Activated naive CD4-positive, alpha-beta T cell treated with anti-CD3 and anti-CD28 coated beads for 36 hours (primary cell): ENCODE measurements at regions of chr14 and their contacts with region 1.

Region 1: DNA sequence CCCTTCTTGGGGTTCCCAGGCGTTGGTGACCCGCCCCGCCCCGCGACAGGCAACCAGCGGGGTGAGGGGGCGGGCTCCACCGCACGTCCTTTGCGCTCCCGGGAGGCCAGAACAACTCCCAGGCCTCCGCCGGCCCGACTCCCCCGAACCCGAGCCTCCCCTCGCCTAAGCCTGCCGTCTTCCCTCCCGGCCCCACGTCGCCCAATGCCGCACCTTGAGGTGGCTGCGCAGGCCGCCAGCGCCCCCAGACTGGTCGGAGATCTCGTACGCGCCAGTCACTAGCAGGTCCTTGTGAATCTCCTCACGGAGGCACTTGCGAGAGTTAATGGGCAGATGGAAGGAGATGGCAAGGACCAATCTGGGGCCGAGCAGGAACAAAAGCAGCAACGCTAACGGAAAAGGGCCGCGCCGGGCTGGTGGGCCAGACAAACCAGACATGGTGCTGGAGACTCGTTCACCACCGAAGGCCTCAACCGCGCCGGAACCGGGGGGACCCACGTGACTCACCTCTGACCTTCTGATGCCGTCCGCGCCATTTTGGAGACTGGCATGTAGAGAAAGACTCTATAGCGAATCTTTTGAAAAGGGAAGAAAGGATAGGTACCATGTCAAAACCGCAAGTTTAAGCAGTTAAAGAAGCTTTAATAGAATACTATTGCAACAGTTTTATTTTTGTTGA is at the start of gene TMED10:
- DNase-seq: peak; percentile 93
- H3K4me3 Mint-ChIP-seq: peak within 1 kb of the TSS; percentile 91
- H3K27ac Mint-ChIP-seq: peak within 1 kb of the TSS; percentile 97
- H3K4me1 Mint-ChIP-seq: peaks cover 43% of the 10 kb centered on the region
- H3K27me3 Mint-ChIP-seq: no peaks in the 10 kb centered on the region
- total RNA-seq, gene TMED10: 151 to 156 TPM

Region 2: DNA sequence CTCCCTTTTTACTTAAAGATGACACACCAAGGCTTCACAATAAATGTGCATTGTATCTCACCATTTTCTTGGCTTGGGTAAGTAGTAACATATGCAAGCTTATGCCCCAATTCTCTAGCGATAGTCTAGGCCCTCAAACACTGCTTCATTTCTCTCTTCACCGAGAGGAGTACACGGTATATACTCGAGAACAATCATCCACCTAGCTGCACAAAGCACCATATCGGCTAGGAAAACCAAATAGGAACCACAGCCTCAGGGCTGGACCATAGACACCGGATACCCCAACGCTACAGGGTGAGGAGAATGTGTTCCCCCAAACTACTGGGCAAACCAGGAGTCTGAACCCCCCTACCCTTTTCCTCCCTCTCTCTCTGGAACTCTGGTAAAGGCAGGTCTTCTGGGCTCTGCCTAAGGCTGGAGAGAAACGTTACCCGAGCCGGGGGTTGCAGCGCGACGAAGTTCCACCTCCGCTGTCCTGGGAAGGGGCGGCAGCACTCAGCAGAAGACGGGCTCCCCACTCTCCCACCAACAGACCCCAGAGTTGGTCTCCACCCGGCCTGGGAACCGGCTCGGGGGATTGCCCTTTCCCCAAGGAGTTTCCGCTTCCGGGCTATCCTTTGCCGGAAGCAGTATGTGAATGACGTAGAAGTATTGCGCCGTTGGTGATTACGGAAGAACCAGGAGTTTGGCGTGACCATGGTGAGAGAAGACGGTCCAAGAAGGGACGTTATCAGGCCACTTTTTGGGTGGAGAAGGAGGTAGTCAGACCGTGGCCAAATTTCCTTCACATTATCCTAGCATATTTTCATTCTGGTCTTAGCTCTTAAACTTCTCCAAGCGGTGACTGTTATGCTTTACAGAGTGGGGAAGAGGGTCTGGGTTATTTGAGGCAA is 463.5 kb before region 1 on chr14 and contains the starts of genes AREL1 and FCF1:
- CTCF ChIA-PET with region 1: no interaction called
- intact Hi-C with region 1: loop called (anchors 1 kb)
- DNase-seq: peak; percentile 93
- H3K4me3 Mint-ChIP-seq: peak within 1 kb of the TSS; percentile 97
- H3K27ac Mint-ChIP-seq: peak within 1 kb of the TSS; percentile 90
- H3K4me1 Mint-ChIP-seq: peaks cover 47% of the 10 kb centered on the region
- H3K27me3 Mint-ChIP-seq: no peaks in the 10 kb centered on the region
- total RNA-seq, gene AREL1: 29.1 to 29.5 TPM
- total RNA-seq, gene FCF1: 83.8 to 87.5 TPM

Region 3: GRCh38 chr14:75050852-75051554 is 125.3 kb before region 1 on chr14 and contains the start of gene MLH3:
- CTCF ChIA-PET with region 1: no interaction called
- intact Hi-C with region 1: loop called (anchors 1 kb)
- DNase-seq: peak; percentile 77
- H3K4me3 Mint-ChIP-seq: peak within 1 kb of the TSS; percentile 92
- H3K27ac Mint-ChIP-seq: peak within 1 kb of the TSS; percentile 86
- H3K4me1 Mint-ChIP-seq: peaks cover 66% of the 10 kb centered on the region
- H3K27me3 Mint-ChIP-seq: no peaks in the 10 kb centered on the region
- total RNA-seq, gene MLH3: 17.3 to 18.5 TPM

Region 4: GRCh38 chr14:75158843-75159614 is 17.3 kb before region 1 on chr14:
- CTCF ChIA-PET with region 1: no interaction called
- intact Hi-C with region 1: loop called (anchors 1 kb)
- DNase-seq: no peak
- H3K4me3 Mint-ChIP-seq: no peak overlapping the region
- H3K27ac Mint-ChIP-seq: peak overlapping the region; percentile 66
- H3K4me1 Mint-ChIP-seq: peaks cover 64% of the 10 kb centered on the region
- H3K27me3 Mint-ChIP-seq: no peaks in the 10 kb centered on the region

Region 5: DNA sequence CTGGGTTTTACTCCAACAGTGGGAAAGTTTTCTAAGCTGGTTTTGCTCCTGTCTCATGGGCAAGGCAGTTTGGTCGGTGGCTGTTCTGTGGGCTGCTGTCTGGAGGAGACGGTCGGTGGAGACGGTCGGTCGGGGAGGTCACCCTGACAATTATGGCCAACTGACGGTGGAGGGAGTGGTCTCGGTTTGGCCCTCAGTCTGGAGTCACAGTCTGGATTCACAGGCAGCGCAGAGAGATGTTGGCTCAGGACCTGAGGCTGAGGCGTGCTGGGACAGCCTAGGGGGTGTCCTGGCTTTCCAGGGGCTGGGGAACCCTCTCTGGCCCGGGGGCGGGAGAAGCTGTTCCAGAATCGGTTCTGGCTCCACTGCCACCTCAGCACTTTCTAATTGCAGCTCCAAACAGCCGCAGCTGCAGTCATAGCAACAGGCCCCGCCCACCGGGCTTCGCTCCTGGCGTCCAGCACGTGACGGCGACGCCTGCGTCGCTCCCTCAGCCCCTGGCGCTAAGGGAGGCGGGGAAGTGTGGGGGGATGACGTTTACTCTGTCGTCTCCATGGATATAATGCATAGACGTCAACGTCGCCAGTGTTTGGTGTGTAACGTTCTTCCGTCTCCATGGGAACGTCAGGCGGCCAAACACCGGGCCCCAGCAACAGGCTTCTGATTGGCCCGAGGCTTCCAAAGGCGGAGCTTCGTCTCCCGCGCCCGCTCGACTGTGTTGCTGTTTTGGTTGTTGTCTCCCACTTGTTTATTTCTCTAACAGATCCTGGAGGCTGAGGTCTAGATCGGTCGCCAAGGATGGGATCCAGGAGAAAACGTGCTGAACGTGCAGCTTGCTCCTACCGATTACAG is 82.6 kb after region 1 on chr14:
- CTCF ChIA-PET with region 1: no interaction called
- intact Hi-C with region 1: loop called (anchors 1 kb)
- DNase-seq: peak; percentile 99
- H3K4me3 Mint-ChIP-seq: peak overlapping the region; percentile 77
- H3K27ac Mint-ChIP-seq: peak overlapping the region; percentile 77
- H3K4me1 Mint-ChIP-seq: peaks cover 18% of the 10 kb centered on the region
- H3K27me3 Mint-ChIP-seq: no peaks in the 10 kb centered on the region

Region 6: GRCh38 chr14:75542588-75543091 is 366.4 kb after region 1 on chr14:
- CTCF ChIA-PET with region 1: no interaction called
- intact Hi-C with region 1: loop called (anchors 1 kb)
- DNase-seq: peak; percentile 97
- H3K4me3 Mint-ChIP-seq: peak overlapping the region; percentile 65
- H3K27ac Mint-ChIP-seq: peak overlapping the region; percentile 99
- H3K4me1 Mint-ChIP-seq: peaks cover 84% of the 10 kb centered on the region
- H3K27me3 Mint-ChIP-seq: no peaks in the 10 kb centered on the region